ENCODE measurements at regions of chr17 and their contacts with region 1.

Region 1: DNA sequence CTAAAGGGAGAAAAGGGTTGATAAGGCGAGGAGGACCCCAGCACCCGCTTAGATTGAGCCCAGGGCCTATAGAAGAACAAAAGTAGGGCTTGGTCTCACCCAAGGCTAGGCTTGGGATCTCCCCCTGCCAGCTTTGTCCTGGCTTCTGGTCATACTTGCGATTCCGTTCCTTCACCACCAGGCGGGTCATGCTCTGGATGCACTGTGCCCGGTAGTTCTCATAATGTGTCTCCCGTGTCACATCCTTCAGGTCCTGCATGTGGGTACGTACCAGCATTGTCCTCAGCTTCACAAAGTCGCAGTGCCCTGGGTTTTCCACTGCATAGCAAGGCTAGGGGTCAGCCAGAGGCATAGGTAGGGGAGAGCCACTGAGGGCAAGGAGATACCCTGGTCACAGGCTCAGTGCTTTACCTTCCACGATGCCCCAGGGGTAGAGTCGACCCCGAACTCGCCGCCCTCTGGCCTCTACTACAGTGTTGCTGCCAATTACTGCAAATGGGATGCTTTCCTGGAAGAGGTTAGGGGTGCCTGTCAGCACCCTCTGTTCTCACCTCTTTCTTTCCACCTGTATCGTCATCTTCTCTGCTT is 6.5 kb upstream of the MTMR4 start:
- DNase-seq: no peak
- H3K4me3 ChIP-seq: no peak overlapping the region
- H3K27ac ChIP-seq: no peak overlapping the region
- H3K4me1 ChIP-seq: peaks cover 4% of the 10 kb centered on the region
- H3K27me3 ChIP-seq: no peaks in the 10 kb centered on the region
- CTCF ChIP-seq: no peak

Region 2: DNA sequence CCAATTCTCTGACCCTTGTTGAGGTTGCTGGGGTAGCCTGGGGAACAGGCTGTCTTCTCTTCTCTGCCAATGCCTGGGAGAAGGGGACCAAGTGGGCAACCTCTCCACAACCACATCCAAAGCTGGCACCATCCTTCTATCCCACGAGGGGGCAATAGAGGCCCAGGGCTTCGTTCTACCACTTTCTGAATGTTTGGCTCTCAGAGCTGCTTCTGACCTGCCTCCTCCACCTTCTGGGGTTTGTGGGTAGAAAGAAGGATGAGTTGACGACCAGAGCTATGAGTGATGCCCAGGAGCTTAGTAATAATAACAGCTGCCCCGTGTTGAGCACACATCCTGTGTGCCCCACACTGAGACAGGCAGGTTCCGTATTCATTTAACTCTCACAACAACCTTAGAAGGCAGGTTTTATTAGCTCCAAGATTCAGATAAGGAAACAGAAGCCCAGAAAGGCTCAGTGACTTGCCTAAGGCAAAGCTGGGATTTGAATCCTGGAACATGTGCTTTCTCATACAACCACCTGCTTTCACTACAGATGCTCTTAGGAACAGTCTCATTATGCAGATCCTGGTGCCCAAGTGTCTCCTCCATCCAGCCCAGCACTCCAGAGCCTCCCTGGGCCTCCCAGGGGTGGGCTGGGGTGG is 203.4 kb before region 1 on chr17:
- intact Hi-C with region 1: no loop called
- DNase-seq: peak; percentile 64
- H3K4me3 ChIP-seq: no peak overlapping the region
- H3K27ac ChIP-seq: no peak overlapping the region
- H3K4me1 ChIP-seq: no peaks in the 10 kb centered on the region
- H3K27me3 ChIP-seq: no peaks in the 10 kb centered on the region
- CTCF ChIP-seq: peak; percentile 77

Region 3: DNA sequence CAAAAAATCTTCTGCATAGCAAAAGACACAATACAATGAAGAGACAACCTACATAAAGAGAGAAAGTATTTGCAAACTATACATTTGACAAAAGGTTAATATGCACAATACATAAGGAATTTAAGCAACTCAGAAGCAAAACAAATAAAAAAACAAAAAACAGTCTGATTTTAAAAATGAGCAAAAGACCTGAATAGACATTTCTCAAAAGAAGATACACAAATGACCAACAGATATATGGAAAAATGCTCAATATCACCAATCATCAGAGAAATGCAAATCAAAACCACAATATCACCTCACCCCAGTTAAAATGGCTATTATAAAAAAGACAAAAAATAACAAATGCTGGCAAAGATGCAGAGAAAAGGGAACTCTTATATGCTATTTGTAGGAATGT is 65.4 kb before region 1 on chr17:
- intact Hi-C with region 1: no loop called
- DNase-seq: no peak
- H3K4me3 ChIP-seq: no peak overlapping the region
- H3K27ac ChIP-seq: no peak overlapping the region
- H3K4me1 ChIP-seq: no peaks in the 10 kb centered on the region
- H3K27me3 ChIP-seq: no peaks in the 10 kb centered on the region
- CTCF ChIP-seq: no peak

Region 4: GRCh38 chr17:58631523-58632323 is 110.8 kb after region 1 on chr17:
- intact Hi-C with region 1: loop called (anchors 10 kb)
- DNase-seq: peak; percentile 97
- H3K4me3 ChIP-seq: peak overlapping the region; percentile 32
- H3K27ac ChIP-seq: peak overlapping the region; percentile 65
- H3K4me1 ChIP-seq: no peaks in the 10 kb centered on the region
- H3K27me3 ChIP-seq: no peaks in the 10 kb centered on the region
- CTCF ChIP-seq: no peak

Region 5: GRCh38 chr17:58692239-58693055 is 171.5 kb after region 1 on chr17 and contains the start of gene RAD51C:
- intact Hi-C with region 1: loop called (anchors 10 kb)
- DNase-seq: peak; percentile 87
- H3K4me3 ChIP-seq: peak within 1 kb of the TSS; percentile 63
- H3K27ac ChIP-seq: peak within 1 kb of the TSS; percentile 59
- H3K4me1 ChIP-seq: peaks cover 7% of the 10 kb centered on the region
- H3K27me3 ChIP-seq: no peaks in the 10 kb centered on the region
- CTCF ChIP-seq: no peak
- total RNA-seq, gene RAD51C: 13.2 to 20.2 TPM

Measured in colonic mucosa (tissue), 4 donors.